ENCODE measurements at regions of chr19 and their contacts with region 1.

Region 1: GRCh38 chr19:32035626-32036025 is 309.8 kb upstream of the ZNF507 start:
- DNase-seq: no peak
- H3K4me3 ChIP-seq: no peak overlapping the region
- H3K27ac ChIP-seq: no peak overlapping the region
- H3K4me1 ChIP-seq: peaks cover 0 to 38% (median 33%) of the 10 kb centered on the region in 4 donors
- H3K27me3 ChIP-seq: no peaks in the 10 kb centered on the region
- CTCF ChIP-seq: no peak
- EP300 ChIP-seq: no peak
- POLR2A ChIP-seq: no peak

Region 2: GRCh38 chr19:32022731-32023563 is 12.7 kb before region 1 on chr19:
- intact Hi-C with region 1: loop called (anchors 2 kb)
- DNase-seq: no peak
- H3K4me3 ChIP-seq: no peak overlapping the region
- H3K27ac ChIP-seq: no peak overlapping the region
- H3K4me1 ChIP-seq: peaks cover 0 to 20% (median 15%) of the 10 kb centered on the region in 4 donors
- H3K27me3 ChIP-seq: no peaks in the 10 kb centered on the region
- CTCF ChIP-seq: no peak
- EP300 ChIP-seq: no peak
- POLR2A ChIP-seq: no peak

Measured in sigmoid colon (tissue), 7 donors.